ENCODE measurements at regions of chr7 and their contacts with region 1.

Region 1: DNA sequence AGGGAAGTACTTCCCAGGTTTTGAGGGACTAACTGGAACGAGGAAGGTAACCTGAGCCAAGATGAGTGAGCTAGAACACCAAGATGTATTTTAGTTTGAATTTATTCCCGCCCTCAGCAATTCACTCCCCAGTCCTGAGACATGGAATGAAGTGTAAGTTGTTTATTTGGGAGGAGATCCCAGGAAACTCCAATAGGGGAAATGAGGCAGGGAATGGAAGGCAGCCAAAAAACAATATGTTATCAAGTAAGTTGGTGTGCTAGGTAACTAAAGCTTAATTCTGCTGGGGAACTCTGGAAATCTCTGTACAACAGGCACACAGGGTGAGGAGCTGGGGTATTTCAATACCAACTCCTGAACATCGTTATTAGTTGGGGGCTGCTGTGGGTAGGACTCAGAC is 189.7 kb upstream of the HDAC9 start:
- DNase-seq: no peak
- ATAC-seq: no peak
- H3K4me3 ChIP-seq: no peak overlapping the region
- H3K4me3 Mint-ChIP-seq: no peak overlapping the region
- H3K27ac ChIP-seq: no peak overlapping the region
- H3K27ac Mint-ChIP-seq: peak overlapping the region; percentile 47
- H3K4me1 ChIP-seq: peaks cover 21 to 46% of the 10 kb centered on the region in 2 donors
- H3K4me1 Mint-ChIP-seq: peaks cover 59% of the 10 kb centered on the region
- H3K27me3 ChIP-seq: no peaks in the 10 kb centered on the region
- H3K27me3 Mint-ChIP-seq: no peaks in the 10 kb centered on the region
- CTCF ChIP-seq: no peak

Region 2: GRCh38 chr7:18320971-18321567 is 15.2 kb after region 1 on chr7:
- CTCF ChIA-PET with region 1: interaction called, 14 read pairs
- POLR2A ChIA-PET with region 1: interaction called, 3 read pairs
- intact Hi-C with region 1: no loop called
- DNase-seq: peak; percentile 63
- ATAC-seq: peak; percentile 81
- H3K4me3 ChIP-seq: no peak overlapping the region
- H3K4me3 Mint-ChIP-seq: no peak overlapping the region
- H3K27ac ChIP-seq: no peak overlapping the region
- H3K27ac Mint-ChIP-seq: no peak overlapping the region
- H3K4me1 ChIP-seq: peaks cover 4 to 20% of the 10 kb centered on the region in 2 donors
- H3K4me1 Mint-ChIP-seq: peaks cover 39% of the 10 kb centered on the region
- H3K27me3 ChIP-seq: no peaks in the 10 kb centered on the region
- H3K27me3 Mint-ChIP-seq: no peaks in the 10 kb centered on the region
- CTCF ChIP-seq: peak; percentile 81

Region 3: GRCh38 chr7:18727115-18727870 is 421.4 kb after region 1 on chr7:
- CTCF ChIA-PET with region 1: no interaction called
- POLR2A ChIA-PET with region 1: no interaction called
- intact Hi-C with region 1: no loop called
- DNase-seq: no peak
- ATAC-seq: no peak
- H3K4me3 ChIP-seq: no peak overlapping the region
- H3K4me3 Mint-ChIP-seq: no peak overlapping the region
- H3K27ac ChIP-seq: no peak overlapping the region
- H3K27ac Mint-ChIP-seq: no peak overlapping the region
- H3K4me1 ChIP-seq: no peaks in the 10 kb centered on the region
- H3K4me1 Mint-ChIP-seq: no peaks in the 10 kb centered on the region
- H3K27me3 ChIP-seq: no peaks in the 10 kb centered on the region
- H3K27me3 Mint-ChIP-seq: no peaks in the 10 kb centered on the region
- CTCF ChIP-seq: no peak

Measured in B cell (primary cell).